ENCODE measurements at regions of chr7 and their contacts with region 1.

Region 1: GRCh38 chr7:74633451-74633921 is 24.0 kb upstream of the GTF2I start:
- DNase-seq: no peak
- ATAC-seq: no peak
- H3K4me3 ChIP-seq: no peak overlapping the region
- H3K27ac ChIP-seq: no peak overlapping the region
- H3K4me1 ChIP-seq: peaks cover 0 to 12% (median 4%) of the 10 kb centered on the region in 9 donors
- H3K27me3 ChIP-seq: no peaks in the 10 kb centered on the region
- CTCF ChIP-seq: no peak

Region 2: GRCh38 chr7:74575138-74575727 is 58.3 kb before region 1 on chr7:
- intact Hi-C with region 1: loop called in 1 of 10 experiments (anchors 10 kb)
- DNase-seq: no peak
- ATAC-seq: no peak
- H3K4me3 ChIP-seq: no peak overlapping the region
- H3K27ac ChIP-seq: no peak overlapping the region
- H3K4me1 ChIP-seq: peaks cover 0 to 5% (median 0%) of the 10 kb centered on the region in 9 donors
- H3K27me3 ChIP-seq: no peaks in the 10 kb centered on the region
- CTCF ChIP-seq: no peak

Region 3: DNA sequence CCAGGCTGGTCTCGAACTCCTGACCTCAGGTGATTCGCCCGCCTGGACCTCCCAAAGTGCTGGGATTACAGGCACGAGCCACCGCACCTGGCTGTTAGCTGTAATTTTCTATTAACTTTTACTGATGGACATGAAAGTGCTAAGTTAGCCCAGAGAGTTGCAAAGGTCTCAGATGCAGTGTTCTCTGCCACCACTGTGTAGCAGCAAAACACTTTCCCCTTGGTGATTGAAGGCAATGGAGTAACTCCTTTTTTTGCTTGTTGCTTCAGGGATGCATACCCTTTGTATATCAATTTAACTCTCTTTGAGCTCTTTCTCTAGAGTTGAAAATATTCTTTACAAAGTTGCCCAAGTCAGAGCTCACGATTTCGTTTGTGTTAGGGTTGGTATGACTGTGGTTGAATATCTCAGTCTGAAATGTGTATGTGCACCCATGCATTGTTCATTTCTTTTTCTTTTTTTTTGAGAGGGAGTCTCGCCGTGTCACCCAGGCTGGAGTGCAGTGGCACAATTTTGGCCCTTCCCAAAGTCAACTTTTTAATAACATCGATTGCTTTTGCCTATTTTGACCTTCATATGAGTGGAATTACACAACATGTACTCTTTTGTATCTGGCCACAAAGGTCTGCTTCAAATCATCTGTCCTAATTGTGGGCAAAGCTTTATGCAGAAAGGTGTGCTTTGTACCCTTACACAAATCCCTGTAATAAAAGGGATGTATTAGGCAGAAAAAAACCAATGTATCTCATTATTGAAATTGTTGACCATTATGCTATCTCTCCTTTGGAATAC is 76.6 kb after region 1 on chr7:
- intact Hi-C with region 1: loop called in 1 of 10 experiments (anchors 10 kb)
- DNase-seq: no peak
- ATAC-seq: no peak
- H3K4me3 ChIP-seq: no peak overlapping the region
- H3K27ac ChIP-seq: no peak overlapping the region
- H3K4me1 ChIP-seq: no peaks in the 10 kb centered on the region
- H3K27me3 ChIP-seq: no peaks in the 10 kb centered on the region
- CTCF ChIP-seq: peak in 1 of 9 donors; percentile 19

Measured in heart right ventricle (tissue), 16 donors.